ENCODE measurements at regions of chr16 and their contacts with region 1.

Region 1: DNA sequence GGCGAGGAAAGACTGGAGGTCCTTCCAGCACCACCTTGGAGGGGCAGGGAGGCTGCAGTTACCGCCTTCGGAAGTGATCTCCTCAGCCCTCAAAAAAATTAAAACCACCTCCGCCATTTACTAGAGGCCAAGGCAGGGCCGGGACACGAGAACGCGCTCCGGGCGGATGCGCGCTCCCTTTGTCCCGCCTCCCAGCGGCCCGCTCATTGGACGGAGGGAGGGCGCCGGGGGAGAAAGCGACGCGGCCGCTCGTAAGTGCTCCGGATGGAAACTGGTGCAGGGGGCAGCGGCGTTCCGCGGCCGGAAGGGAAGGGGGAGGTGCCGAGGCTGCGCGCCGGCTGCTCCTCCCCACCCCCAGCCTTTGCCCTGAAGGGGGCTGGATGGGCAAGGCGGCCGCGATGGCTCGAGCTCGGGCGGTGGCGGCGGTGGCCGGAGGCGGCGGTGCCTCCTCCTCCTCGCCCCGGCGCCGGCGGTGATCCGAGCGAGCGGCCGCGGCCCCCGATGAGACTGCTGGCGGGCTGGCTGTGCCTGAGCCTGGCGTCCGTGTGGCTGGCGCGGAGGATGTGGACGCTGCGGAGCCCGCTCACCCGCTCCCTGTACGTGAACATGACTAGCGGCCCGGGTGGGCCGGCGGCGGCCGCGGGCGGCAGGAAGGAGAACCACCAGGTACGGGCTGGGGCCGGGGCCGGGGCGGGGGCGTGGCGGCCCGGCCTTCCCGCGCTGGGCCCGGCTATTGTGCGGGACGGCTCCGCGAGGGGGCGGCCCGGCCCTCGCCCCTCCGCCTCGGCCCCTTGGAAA is at the start of gene METTL9:
- DNase-seq: peak; percentile 96
- H3K4me3 ChIP-seq: peak within 1 kb of the TSS; percentile 60 to 90 (median 77)
- H3K27ac ChIP-seq: peak within 1 kb of the TSS; percentile 61
- H3K4me1 ChIP-seq: peaks cover 21% of the 10 kb centered on the region
- H3K27me3 ChIP-seq: peaks cover 0 to 2% of the 10 kb centered on the region in 2 experiments
- CTCF ChIP-seq: no peak
- POLR2A ChIP-seq: peak; percentile 90
- total RNA-seq, gene METTL9: 116 and 121 TPM in 2 replicates

Region 2: DNA sequence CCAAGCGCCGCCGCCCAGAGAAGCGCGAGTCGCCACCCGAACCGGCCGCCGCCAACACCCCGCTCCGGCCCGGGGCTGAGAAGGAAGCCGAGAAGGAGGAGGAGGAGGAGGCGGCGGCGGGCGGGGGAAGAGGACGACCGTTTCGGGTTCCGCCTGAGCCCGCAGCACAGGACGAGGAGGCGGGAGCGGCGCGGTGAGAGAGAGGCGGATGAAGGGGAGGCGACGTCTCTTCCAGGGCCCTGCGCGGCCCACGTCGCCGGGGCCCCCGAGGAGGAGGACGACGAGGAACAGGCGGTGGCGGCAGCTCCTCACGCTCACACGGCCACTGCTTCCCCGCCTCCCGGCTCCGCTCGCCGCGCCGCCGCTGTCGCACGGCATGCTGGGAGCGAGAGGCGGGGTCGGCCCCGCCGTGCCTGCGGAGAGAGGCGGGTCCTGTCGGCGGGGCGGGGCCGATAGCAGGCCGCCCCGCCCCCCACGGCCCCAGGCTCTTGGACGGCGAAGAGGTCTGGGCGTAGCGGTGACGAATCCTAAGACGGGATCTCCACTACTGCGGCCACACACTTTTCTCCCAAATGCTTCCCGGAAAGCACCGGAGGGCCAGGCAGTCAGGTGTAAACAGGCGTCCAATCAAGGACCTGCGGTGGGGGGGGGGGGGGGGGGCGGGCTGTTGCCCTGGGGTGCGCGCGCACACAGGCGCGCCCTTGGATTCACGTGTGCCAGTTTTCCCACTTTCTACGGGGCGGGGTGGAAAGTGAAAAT is 97.3 kb before region 1 on chr16:
- CTCF ChIA-PET with region 1: no interaction called
- POLR2A ChIA-PET with region 1: no interaction called
- dilution Hi-C with region 1: no loop called
- intact Hi-C with region 1: no loop called
- DNase-seq: peak; percentile 95
- H3K4me3 ChIP-seq: peak overlapping the region; percentile 48 to 85 (median 48)
- H3K27ac ChIP-seq: peak overlapping the region; percentile 41
- H3K4me1 ChIP-seq: peaks cover 2% of the 10 kb centered on the region
- H3K27me3 ChIP-seq: no peaks in the 10 kb centered on the region
- CTCF ChIP-seq: no peak
- POLR2A ChIP-seq: peak; percentile 85

Region 3: DNA sequence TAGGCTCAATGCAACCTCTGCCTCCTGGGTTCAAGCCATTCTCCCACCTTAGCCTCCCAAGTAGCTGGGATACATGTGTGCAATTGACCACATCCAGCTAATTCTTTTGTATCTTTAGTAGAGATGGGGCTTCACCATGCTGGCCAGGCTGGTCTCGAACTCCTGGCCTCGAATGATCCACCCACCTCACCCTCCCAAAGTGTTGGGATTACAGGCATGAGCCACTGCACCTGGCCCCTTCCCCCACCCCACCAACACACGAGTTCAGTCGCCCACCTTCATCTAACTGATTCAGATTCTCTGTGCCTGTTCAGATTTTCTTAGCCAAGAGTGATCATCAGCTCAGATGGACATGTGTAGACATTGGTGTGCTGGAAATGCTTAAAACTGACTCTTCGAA is 25.1 kb before region 1 on chr16:
- CTCF ChIA-PET with region 1: no interaction called
- POLR2A ChIA-PET with region 1: no interaction called
- dilution Hi-C with region 1: no loop called
- intact Hi-C with region 1: no loop called
- DNase-seq: no peak
- H3K4me3 ChIP-seq: no peak overlapping the region
- H3K27ac ChIP-seq: no peak overlapping the region
- H3K4me1 ChIP-seq: no peaks in the 10 kb centered on the region
- H3K27me3 ChIP-seq: peaks cover 0 to 13% of the 10 kb centered on the region in 2 experiments
- CTCF ChIP-seq: no peak
- POLR2A ChIP-seq: no peak

Region 4: DNA sequence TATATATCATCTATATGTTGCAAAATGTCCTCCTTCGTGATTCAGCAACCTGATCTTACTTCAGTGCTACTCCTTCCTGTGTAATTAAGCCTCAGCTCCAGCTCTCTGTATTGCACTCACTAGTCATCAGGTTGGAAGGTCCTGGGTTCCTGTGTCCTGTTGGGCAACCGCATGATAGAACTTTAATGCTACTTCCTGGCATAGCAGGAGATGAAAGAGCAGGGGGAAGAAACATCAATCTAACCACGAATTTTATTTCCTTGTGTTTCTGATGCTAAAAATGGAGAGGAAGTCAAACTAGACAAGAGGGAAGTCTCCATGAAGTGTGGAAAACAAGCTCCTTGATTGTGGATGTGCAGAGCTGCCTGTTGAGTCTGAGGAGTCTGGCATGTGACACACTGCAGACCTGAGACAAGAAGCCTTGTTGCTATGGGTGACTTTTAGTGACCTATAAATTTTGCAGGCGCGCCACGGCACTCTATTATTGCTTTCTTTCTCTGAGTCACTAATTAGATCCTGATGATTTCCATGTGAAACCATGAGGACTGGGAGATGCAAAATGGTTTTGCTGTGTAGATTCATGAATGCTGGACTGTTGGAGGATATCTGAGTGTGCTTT is 27.3 kb after region 1 on chr16:
- CTCF ChIA-PET with region 1: no interaction called
- POLR2A ChIA-PET with region 1: no interaction called
- dilution Hi-C with region 1: no loop called
- intact Hi-C with region 1: loop called (anchors 1 kb)
- DNase-seq: peak; percentile 68
- H3K4me3 ChIP-seq: no peak overlapping the region
- H3K27ac ChIP-seq: peak overlapping the region; percentile 54
- H3K4me1 ChIP-seq: peaks cover 14% of the 10 kb centered on the region
- H3K27me3 ChIP-seq: no peaks in the 10 kb centered on the region
- CTCF ChIP-seq: no peak
- POLR2A ChIP-seq: no peak

Region 5: GRCh38 chr16:21646721-21647561 is 47.5 kb after region 1 on chr16:
- CTCF ChIA-PET with region 1: no interaction called
- POLR2A ChIA-PET with region 1: no interaction called
- dilution Hi-C with region 1: no loop called
- intact Hi-C with region 1: loop called (anchors 5 kb)
- DNase-seq: no peak
- H3K4me3 ChIP-seq: no peak overlapping the region
- H3K27ac ChIP-seq: no peak overlapping the region
- H3K4me1 ChIP-seq: peaks cover 11% of the 10 kb centered on the region
- H3K27me3 ChIP-seq: no peaks in the 10 kb centered on the region
- CTCF ChIP-seq: no peak
- POLR2A ChIP-seq: no peak